ENCODE measurements at regions of chr2 and their contacts with region 1.

Region 1: DNA sequence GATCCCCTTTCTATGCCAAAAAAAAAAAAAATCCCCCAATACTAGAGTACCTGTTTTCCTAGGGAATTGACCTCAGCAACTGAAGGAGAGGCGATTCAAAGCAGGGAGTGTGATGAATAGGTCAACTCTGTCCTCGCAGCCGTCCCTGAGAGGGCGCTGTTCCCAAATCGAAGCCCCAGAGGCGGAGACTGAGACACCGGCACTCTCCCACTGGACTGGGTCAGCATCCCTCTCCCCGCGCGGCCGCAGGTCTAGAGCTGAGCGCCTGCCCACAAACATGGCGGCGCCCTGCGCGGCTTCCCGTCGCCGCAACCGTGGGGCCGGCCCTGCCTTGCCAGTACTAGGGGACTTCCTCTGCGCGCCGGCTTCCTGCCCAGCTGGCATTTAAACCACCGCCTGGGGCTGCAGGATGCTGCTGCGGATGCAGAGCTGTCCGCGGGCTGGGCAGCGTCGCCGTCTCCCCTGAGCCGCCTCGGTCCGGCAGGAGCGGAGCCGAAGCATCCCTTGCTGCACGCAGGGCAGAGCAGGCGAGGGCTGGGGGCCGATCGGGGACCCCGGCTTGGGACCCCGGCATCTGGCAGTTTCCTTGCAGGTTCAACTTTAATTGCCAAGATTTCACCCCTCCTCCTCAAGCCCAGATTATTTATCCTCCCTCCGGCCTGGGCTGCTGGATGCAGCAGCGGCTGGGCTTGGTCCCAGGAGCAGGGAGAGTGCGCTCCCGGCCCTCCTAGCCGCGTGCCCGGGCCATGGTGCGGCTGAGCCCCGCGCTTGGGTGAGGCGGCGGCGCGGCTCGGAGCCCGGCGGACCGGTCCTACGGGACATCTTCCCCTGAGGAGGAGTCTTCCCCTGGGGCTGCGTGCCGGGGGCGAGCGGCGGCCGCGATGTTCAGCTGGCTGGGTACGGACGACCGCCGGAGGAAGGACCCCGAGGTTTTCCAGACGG is at the start of gene EHD3:
- DNase-seq: peak; percentile 97
- ATAC-seq: peak; percentile 98
- H3K4me3 Mint-ChIP-seq: peak within 1 kb of the TSS; percentile 74
- H3K27ac Mint-ChIP-seq: no peak within 1 kb of the TSS
- H3K4me1 Mint-ChIP-seq: peaks cover 20% of the 10 kb centered on the region
- H3K27me3 Mint-ChIP-seq: peaks cover 11% of the 10 kb centered on the region
- CTCF ChIP-seq: peak; percentile 57; the same call in 1 of the 2 replicates
- total RNA-seq, gene EHD3: 9.8 to 10.2 TPM (median 10.0 TPM) in 3 replicates

Region 2: DNA sequence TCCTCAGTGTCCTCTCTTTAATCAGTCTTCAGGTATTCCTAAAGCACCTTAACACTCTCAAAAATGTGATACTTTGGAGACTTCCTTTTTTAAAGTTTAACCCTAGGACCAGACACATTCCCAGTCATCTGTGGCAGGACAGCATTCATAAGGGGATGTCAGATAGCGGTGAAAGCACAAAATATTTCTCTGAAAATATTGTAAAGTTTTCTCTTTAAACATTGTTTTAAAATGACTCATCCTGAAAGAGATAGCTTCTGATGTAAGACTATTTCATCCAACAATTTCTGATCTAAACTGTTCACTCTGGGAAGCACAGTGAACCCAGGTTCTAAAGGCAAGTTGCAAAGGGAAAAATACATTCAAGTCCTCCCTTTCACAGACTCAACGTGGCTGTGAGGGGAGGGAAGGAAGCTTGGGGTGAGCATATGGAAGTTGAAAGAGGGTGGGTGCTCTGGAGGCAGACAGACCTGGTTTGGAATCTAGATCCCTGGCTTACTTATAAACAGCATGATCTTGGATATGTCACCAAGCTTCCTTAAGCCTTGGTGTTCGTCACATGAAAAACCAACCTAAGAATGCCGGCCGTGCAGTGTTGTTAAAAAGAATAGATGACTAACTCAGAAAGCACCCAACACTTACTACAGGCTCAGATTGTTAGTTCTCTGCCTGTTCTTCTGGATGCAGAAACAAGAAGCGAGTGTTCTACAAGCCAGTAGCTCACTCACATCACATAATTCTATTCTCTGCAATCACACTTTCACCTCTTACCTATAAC is 107.9 kb before region 1 on chr2:
- CTCF ChIA-PET with region 1: no interaction called
- POLR2A ChIA-PET with region 1: no interaction called
- DNase-seq: no peak
- ATAC-seq: no peak
- H3K4me3 Mint-ChIP-seq: no peak overlapping the region
- H3K27ac Mint-ChIP-seq: no peak overlapping the region
- H3K4me1 Mint-ChIP-seq: peaks cover 35% of the 10 kb centered on the region
- H3K27me3 Mint-ChIP-seq: no peaks in the 10 kb centered on the region
- CTCF ChIP-seq: no peak

Region 3: DNA sequence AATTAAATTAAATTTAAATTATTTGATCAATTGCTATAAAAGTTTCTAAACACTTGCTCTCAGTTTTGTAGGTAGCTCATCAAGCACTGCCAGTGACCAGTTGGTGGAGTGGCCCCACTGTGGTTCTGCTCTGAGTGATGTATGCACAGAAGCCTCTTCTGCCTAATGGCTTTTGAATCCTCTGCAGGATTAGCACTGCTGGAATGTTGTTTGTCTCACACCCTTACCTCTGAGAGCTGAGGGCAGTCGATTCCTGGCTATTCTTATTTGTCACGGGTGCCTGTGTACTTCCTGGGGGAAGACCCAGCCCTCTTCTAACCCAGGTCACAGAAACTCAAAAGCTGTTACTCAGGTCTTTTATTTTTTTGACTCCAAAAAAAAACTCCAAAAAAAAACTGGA is 26.2 kb before region 1 on chr2:
- CTCF ChIA-PET with region 1: interaction called, 14 read pairs
- POLR2A ChIA-PET with region 1: no interaction called
- DNase-seq: no peak
- ATAC-seq: peak; percentile 87
- H3K4me3 Mint-ChIP-seq: no peak overlapping the region
- H3K27ac Mint-ChIP-seq: no peak overlapping the region
- H3K4me1 Mint-ChIP-seq: peaks cover 8% of the 10 kb centered on the region
- H3K27me3 Mint-ChIP-seq: peaks cover 2% of the 10 kb centered on the region; the same call in 1 of the 2 replicates
- CTCF ChIP-seq: no peak

Region 4: DNA sequence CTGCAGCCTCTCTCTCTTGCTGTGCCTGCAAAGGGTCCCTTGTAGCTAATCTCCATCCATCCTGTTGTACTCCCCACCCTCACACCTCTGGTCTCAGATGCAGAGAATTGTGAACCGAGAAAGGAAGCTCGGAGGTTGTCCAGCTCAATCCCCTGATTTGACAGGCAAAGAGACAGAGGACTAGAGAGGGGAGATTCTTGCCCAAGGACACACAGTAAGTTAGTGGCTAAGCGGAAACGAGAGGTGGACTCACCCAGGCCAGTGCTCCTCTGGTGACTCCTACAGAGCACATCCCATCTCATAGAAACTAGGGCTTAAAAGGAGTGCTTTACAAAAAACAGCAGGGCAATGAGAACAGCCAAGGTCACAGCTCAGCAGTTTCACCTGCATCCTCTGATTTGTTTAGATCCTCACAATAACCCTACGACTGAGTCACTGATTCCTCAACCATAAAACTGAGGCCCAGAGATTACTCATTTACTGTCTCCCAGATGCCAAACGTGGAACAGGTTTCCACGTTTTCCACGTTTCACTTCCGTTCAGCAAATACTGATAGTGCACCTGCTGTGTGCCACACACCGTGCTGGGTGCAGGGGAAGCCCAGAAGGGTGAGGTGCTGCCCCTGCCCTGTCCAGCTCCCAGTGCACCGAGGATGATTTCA is 22.0 kb after region 1 on chr2:
- CTCF ChIA-PET with region 1: interaction called, 18 read pairs
- POLR2A ChIA-PET with region 1: interaction called, 4 read pairs
- DNase-seq: no peak
- ATAC-seq: no peak
- H3K4me3 Mint-ChIP-seq: no peak overlapping the region
- H3K27ac Mint-ChIP-seq: 0 out of 2 replicates have a peak overlapping the region, but pooled peaks have one; percentile 36
- H3K4me1 Mint-ChIP-seq: peaks cover 40% of the 10 kb centered on the region
- H3K27me3 Mint-ChIP-seq: no peaks in the 10 kb centered on the region
- CTCF ChIP-seq: no peak

Region 5: GRCh38 chr2:31270136-31270535 is 36.1 kb after region 1 on chr2:
- CTCF ChIA-PET with region 1: interaction called, 12 read pairs
- POLR2A ChIA-PET with region 1: no interaction called
- DNase-seq: no peak
- ATAC-seq: peak; percentile 30
- H3K4me3 Mint-ChIP-seq: no peak overlapping the region
- H3K27ac Mint-ChIP-seq: peak overlapping the region; percentile 71; the same call in 1 of the 2 replicates
- H3K4me1 Mint-ChIP-seq: peaks cover 38% of the 10 kb centered on the region
- H3K27me3 Mint-ChIP-seq: no peaks in the 10 kb centered on the region
- CTCF ChIP-seq: no peak